Tibial artery (tissue), 4 donors: ENCODE measurements at regions of chr19 and their contacts with region 1.

Region 1: DNA sequence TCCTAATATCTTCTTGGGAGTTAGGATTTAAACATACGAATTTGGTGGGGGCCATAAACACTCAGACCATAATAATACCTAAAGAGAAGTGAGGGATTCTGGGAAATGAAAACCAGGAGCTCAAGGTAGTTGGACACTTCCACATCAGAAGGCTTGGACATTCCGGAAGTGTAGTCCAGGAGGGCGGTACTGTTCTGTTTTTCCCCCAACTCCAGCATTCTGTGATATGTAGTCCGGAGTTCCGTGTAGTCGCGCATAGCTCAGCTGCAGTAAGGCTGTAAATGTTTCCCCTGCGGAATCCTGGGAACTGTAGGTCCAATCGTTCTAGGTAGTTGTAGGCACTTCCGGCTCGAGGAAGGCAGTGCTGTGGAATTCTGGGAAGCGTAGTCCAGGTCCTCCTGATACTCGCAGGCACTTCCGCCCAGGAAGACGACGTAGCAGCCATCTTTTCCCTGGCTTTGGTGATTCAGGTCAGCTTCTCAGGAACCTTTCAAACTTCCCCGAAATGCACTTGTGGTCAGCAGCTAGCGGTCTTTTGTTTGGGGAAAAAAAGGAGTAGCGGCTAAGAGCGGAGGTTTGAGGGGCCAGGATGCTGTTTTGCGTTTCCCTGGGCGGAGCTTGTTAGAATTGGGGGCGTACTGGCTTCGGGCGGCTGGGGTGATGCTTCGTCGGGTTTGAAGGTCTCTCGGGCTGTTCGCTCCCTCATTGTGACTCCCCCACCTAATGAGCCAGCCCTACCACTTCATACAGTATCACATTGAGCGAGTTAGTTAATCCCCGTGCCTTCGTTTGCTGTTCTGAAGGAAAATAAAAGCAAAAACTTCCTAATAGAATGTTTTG is at the start of gene ZNF226:
- DNase-seq: peak; percentile 94 to 95
- H3K4me3 ChIP-seq: peak within 1 kb of the TSS; percentile 66 to 75
- H3K27ac ChIP-seq: peak within 1 kb of the TSS; percentile 86
- H3K4me1 ChIP-seq: peaks cover 0 to 10% (median 8%) of the 10 kb centered on the region in 4 donors
- H3K27me3 ChIP-seq: no peaks in the 10 kb centered on the region
- CTCF ChIP-seq: no peak

Region 2: GRCh38 chr19:44113138-44113783 is 51.6 kb before region 1 on chr19 and contains the start of gene ZNF225:
- intact Hi-C with region 1: loop called (anchors 10 kb)
- DNase-seq: peak; percentile 96 to 98
- H3K4me3 ChIP-seq: peak within 1 kb of the TSS; percentile 66 to 83
- H3K27ac ChIP-seq: peak within 1 kb of the TSS; percentile 82 to 83
- H3K4me1 ChIP-seq: peaks cover 0 to 20% (median 10%) of the 10 kb centered on the region in 4 donors
- H3K27me3 ChIP-seq: no peaks in the 10 kb centered on the region
- CTCF ChIP-seq: no peak

Region 3: DNA sequence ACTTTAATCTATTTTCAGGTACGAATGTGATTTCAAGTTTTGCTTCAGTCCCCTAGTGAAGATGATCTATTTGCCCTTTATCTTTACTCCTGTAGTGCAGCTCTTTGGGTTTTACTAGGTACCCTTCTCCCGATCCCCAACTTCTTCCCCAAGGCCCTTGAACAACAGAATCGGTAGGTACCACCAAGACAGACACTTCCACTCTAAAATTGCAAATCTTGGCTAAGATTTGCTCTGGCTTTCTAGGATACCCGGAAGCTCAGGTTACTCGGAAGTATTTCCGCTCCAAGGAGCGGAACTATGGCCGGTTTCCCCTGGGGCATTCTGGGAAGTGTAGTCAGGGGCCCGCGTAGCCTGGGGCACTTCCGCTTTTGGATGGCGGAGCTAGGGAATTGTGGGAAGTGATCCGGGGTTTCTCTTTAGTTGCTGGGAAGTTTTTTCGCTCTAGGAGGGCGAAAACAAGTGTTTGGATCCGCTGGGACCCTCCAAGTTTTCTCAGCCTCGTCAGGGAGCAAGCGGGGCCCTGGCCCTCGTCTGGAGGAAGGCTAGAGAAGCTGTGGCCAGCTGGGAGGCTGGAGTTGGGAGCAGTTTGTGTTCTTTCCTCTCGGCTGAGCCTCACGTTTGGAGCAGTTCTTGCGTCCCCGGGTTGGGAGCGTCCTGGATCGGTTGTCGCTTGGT is 42.4 kb after region 1 on chr19:
- intact Hi-C with region 1: loop called (anchors 5 kb)
- DNase-seq: peak; percentile 81 to 91
- H3K4me3 ChIP-seq: peak overlapping the region; percentile 56 to 69
- H3K27ac ChIP-seq: peak overlapping the region; percentile 78 to 86
- H3K4me1 ChIP-seq: peaks cover 0 to 4% (median 0%) of the 10 kb centered on the region in 4 donors
- H3K27me3 ChIP-seq: no peaks in the 10 kb centered on the region
- CTCF ChIP-seq: no peak